ENCODE measurements at regions of chr2 and their contacts with region 1.

Region 1: DNA sequence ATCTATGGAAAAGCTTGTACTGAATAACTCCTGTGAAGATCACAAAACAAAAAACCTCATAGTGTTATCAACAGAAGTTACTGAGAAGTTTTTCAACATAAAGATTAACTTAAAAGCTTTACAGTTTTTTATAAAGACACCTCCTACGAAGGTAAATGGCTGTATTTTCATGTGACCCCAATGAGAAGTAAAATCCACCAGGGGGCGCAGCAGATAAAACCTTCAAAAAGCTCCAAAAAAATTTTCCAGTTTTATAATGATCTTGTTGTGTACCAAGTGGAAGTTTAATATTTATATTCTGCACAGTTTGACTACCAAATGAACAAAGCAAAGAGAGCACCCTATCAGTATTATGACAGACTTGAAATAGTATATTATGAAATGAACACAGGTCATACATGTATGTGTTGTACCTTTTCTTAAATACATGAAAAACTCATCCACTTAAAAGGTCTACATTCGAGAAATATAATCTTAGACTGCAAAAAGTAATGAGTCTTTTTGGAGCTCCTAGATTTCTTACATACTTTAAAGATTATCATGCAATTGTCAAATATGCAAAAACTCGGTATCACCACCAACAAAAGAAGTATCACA is 38.5 kb downstream of the PNO1 start:
- DNase-seq: no peak
- ATAC-seq: peak; percentile 34

Region 2: GRCh38 chr2:68121873-68122679 is 74.1 kb before region 1 on chr2:
- intact Hi-C with region 1: loop called (anchors 5 kb)
- DNase-seq: peak; percentile 93
- ATAC-seq: peak; percentile 64

Region 3: DNA sequence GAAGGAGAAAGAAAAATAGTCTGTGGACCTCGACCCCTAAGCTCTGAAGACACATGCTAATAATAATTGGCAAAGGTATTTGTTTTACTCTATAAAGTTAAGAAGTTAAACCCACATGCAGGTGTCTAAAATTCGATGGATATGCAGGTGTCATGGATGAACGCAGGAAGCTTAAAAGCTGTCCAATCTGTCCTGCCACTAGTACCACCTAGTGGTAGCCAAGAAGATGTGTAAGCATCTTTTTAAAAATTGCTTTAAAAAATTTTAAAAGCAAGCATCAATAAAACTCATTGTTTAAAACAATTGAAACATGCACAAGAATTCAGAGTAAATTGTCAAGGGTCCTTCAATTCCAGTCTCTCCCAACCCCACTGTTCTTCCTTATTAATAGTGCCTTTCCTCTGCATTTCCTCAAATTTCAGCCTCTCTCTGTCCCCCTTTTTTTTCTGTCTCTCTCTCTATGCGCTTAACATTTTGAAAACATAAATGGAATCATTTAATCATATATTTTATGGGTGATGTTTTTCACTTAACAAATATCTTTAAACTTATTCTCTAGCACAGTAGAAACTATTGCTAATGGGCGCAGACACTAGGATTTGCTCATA is 86.7 kb after region 1 on chr2:
- intact Hi-C with region 1: loop called (anchors 2 kb)
- DNase-seq: no peak
- ATAC-seq: no peak

Region 4: DNA sequence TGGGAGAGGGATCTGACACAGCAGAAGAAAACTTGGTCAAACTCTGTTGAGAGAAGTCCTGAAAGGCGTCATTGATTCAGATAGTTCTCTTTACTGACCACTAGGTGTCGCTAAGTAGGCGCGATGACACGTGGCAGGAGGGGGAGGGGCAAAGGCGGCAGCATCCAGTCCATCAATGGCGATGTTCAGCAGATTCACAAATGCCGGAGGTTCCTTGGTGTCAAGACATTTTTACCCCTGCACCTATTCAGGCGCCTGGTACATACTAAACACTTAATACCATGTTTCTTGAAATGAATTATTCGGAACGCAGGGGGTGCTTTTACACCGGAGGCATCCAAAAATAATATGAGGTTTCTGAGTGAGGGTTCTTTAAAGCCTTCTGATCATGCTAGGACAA is 165.9 kb after region 1 on chr2:
- intact Hi-C with region 1: loop called (anchors 10 kb)
- DNase-seq: peak; percentile 92
- ATAC-seq: peak; percentile 71

Region 5: GRCh38 chr2:68441179-68441993 is 245.2 kb after region 1 on chr2:
- intact Hi-C with region 1: loop called (anchors 5 kb)
- DNase-seq: peak; percentile 83
- ATAC-seq: peak; percentile 93

Region 6: GRCh38 chr2:68467077-68467960 is 271.1 kb after region 1 on chr2 and contains the starts of genes APLF and FBXO48:
- intact Hi-C with region 1: no loop called
- DNase-seq: peak; percentile 98
- ATAC-seq: peak; percentile 99
- total RNA-seq, gene APLF: 3.8 TPM
- total RNA-seq, gene FBXO48: 1.1 TPM

Measured in Right ventricle myocardium inferior (tissue), 1 donor.